ENCODE measurements at regions of chr6 and their contacts with region 1.

Region 1: DNA sequence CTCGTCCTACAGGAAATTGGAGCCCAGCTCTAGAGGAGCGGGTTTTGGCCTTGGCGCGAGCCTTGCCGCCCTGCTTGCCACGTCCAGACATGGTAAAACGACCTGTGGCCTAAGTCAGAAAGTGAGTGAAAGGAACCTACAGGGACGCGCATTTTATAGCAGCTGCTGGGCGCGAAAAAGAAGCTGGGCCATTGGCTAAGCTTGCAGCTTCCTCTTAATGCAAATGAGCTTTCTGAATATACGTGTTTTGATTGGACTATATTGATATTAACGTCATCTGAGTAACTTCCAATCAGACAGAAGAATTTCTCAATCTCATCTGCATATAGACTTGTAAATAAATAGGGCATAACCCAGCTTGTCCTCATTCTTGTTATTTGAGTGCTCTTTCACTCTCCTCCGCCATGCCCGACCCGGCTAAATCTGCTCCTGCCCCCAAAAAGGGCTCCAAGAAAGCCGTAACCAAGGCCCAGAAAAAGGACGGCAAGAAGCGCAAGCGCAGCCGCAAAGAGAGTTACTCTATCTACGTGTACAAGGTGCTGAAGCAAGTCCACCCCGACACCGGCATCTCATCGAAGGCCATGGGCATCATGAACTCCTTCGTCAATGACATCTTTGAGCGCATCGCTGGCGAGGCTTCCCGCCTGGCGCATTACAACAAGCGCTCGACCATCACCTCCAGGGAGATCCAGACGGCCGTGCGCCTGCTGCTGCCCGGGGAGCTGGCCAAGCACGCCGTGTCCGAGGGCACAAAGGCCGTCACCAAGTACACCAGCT is 18.9 kb downstream of the OR2B2 start:
- DNase-seq: peak; percentile 95
- H3K4me3 Mint-ChIP-seq: no peak overlapping the region
- H3K27ac Mint-ChIP-seq: no peak overlapping the region
- H3K4me1 Mint-ChIP-seq: peaks cover 33% of the 10 kb centered on the region
- H3K27me3 Mint-ChIP-seq: no peaks in the 10 kb centered on the region

Region 2: GRCh38 chr6:26270903-26271667 is 1622.2 kb before region 1 on chr6:
- CTCF ChIA-PET with region 1: no interaction called
- POLR2A ChIA-PET with region 1: interaction called, 10 read pairs
- DNase-seq: peak; percentile 91
- H3K4me3 Mint-ChIP-seq: no peak overlapping the region
- H3K27ac Mint-ChIP-seq: no peak overlapping the region
- H3K4me1 Mint-ChIP-seq: peaks cover 32% of the 10 kb centered on the region
- H3K27me3 Mint-ChIP-seq: no peaks in the 10 kb centered on the region

Region 3: GRCh38 chr6:27146706-27147505 is 746.3 kb before region 1 on chr6:
- CTCF ChIA-PET with region 1: interaction called, 4 read pairs
- POLR2A ChIA-PET with region 1: interaction called, 38 read pairs
- DNase-seq: peak; percentile 88
- H3K4me3 Mint-ChIP-seq: no peak overlapping the region
- H3K27ac Mint-ChIP-seq: no peak overlapping the region
- H3K4me1 Mint-ChIP-seq: peaks cover 24% of the 10 kb centered on the region
- H3K27me3 Mint-ChIP-seq: no peaks in the 10 kb centered on the region

Region 4: DNA sequence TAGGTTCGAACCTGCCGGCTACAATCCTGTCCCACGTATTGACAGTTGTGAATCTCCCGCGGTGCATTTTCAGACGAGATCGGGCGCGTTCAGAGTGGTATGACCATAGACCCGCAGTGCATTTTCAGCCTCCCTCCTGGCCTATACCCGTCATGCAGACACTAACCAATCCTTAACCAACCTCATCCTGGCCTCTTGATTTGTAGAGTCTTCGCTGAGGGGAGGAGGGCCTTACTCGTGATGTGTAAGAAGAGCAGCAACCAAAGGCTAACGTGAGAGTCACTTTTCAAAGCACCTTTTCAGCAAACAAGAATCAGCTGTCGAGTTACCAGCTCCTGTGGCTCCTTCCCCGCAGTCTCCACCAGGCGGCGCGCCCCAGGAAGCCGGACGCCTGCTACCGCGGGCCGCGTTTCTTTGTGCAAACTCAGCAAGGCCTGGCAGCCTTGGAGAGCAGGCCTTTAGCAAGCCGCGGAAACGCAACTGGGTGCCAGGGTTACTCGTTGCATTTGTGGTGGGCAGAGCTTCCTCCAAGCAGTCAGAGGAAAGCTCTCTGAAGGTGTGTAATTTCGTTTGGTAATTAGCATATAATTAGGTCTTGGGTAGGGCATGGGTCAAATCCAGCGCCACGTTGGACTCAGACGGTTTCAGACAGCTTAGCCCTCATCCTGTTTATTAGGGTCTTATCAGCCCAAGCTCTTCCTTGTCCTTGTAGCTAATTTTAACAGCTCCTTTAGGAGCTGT is 120.8 kb before region 1 on chr6:
- CTCF ChIA-PET with region 1: interaction called, 21 read pairs
- POLR2A ChIA-PET with region 1: no interaction called
- DNase-seq: peak; percentile 90
- H3K4me3 Mint-ChIP-seq: no peak overlapping the region
- H3K27ac Mint-ChIP-seq: peak overlapping the region; percentile 51
- H3K4me1 Mint-ChIP-seq: peaks cover 18% of the 10 kb centered on the region
- H3K27me3 Mint-ChIP-seq: peaks cover 6% of the 10 kb centered on the region

Region 5: DNA sequence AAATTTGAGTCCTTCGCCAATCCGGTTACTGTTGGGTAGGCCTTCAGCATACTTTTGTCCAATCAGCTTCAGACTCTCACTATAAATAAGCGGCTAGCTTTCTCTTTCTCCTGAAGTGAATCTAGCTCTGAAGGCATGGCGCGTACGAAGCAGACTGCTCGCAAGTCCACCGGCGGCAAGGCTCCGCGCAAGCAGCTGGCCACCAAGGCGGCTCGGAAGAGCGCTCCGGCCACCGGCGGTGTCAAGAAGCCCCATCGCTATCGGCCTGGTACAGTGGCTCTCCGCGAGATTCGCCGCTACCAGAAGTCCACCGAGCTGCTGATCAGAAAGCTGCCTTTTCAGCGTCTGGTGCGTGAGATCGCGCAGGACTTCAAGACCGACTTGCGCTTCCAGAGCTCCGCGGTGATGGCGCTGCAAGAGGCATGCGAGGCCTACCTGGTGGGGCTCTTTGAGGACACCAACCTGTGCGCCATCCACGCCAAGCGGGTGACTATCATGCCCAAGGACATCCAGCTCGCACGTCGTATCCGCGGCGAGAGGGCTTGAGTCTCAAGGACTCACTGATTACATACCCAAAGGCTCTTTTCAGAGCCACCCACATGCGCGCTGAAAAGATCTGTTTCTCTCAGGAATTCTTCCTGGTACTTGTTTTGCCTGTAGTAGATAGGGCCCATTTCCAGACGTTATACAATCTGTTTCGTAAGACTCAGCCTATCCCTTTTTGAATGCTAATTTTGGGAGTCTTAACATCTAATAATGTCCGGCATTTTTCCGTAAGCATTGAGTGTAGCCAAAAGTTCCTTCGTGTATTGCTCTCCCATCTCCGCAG is 83.1 kb before region 1 on chr6:
- CTCF ChIA-PET with region 1: interaction called, 26 read pairs
- POLR2A ChIA-PET with region 1: interaction called, 197 read pairs
- DNase-seq: peak; percentile 89
- H3K4me3 Mint-ChIP-seq: peak overlapping the region; percentile 86
- H3K27ac Mint-ChIP-seq: peak overlapping the region; percentile 99
- H3K4me1 Mint-ChIP-seq: peaks cover 65% of the 10 kb centered on the region
- H3K27me3 Mint-ChIP-seq: no peaks in the 10 kb centered on the region

Region 6: GRCh38 chr6:27838058-27838944 is 54.9 kb before region 1 on chr6:
- CTCF ChIA-PET with region 1: interaction called, 15 read pairs
- POLR2A ChIA-PET with region 1: interaction called, 98 read pairs
- DNase-seq: peak; percentile 92
- H3K4me3 Mint-ChIP-seq: no peak overlapping the region
- H3K27ac Mint-ChIP-seq: no peak overlapping the region
- H3K4me1 Mint-ChIP-seq: peaks cover 31% of the 10 kb centered on the region
- H3K27me3 Mint-ChIP-seq: no peaks in the 10 kb centered on the region

Region 7: GRCh38 chr6:27871924-27872638 is 21.2 kb before region 1 on chr6:
- CTCF ChIA-PET with region 1: interaction called, 47 read pairs
- POLR2A ChIA-PET with region 1: interaction called, 593 read pairs
- DNase-seq: peak; percentile 94
- H3K4me3 Mint-ChIP-seq: peak overlapping the region; percentile 92
- H3K27ac Mint-ChIP-seq: peak overlapping the region; percentile 99
- H3K4me1 Mint-ChIP-seq: peaks cover 65% of the 10 kb centered on the region
- H3K27me3 Mint-ChIP-seq: no peaks in the 10 kb centered on the region